ENCODE measurements at regions of chr7 and their contacts with region 1.

Region 1: DNA sequence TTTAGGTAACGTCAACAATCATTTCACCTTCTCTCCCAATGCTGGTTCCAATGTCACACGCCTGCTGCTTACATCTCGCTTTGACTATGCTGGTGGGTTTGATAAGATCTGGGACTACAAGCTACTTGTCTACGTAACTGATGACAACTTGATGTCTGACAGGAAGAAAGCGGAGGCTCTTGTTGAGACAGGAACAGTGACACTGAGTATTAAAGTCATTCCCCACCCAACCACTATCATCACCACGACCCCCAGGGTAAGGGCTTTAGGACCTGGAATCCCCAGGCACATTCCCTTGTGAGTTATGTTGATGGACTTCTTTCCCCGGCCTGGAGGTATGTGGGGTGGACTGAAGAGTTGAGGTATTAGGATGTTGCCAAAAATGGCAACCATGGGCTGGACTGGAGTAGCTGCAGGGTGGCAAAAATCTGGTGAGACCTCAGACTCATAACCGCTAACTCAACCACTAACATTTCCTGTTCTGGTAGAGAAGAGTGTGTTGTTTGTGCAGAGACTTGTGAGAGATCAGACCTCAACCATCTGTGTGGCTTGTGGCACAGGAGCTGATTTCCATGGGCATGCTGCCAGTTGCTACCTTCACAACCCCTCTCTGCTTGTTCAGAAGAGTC is 59.2 kb downstream of the CDHR3 start:
- DNase-seq: peak; percentile 82
- ATAC-seq: peak; percentile 87
- H3K4me3 Mint-ChIP-seq: peak overlapping the region; percentile 19
- H3K27ac Mint-ChIP-seq: peak overlapping the region; percentile 84
- H3K4me1 Mint-ChIP-seq: peaks cover 57% of the 10 kb centered on the region
- H3K27me3 Mint-ChIP-seq: no peaks in the 10 kb centered on the region

Region 2: GRCh38 chr7:105678811-105679495 is 343.4 kb before region 1 on chr7:
- CTCF ChIA-PET with region 1: interaction called, 6 read pairs
- POLR2A ChIA-PET with region 1: no interaction called
- intact Hi-C with region 1: loop called (anchors 5 kb)
- DNase-seq: peak; percentile 62
- ATAC-seq: peak; percentile 21
- H3K4me3 Mint-ChIP-seq: peak overlapping the region; percentile 83
- H3K27ac Mint-ChIP-seq: peak overlapping the region; percentile 93
- H3K4me1 Mint-ChIP-seq: peaks cover 63% of the 10 kb centered on the region
- H3K27me3 Mint-ChIP-seq: no peaks in the 10 kb centered on the region

Region 3: GRCh38 chr7:105691733-105692564 is 330.4 kb before region 1 on chr7:
- CTCF ChIA-PET with region 1: interaction called, 3 read pairs
- POLR2A ChIA-PET with region 1: no interaction called
- intact Hi-C with region 1: loop called in 1 of 2 experiments (anchors 5 kb)
- DNase-seq: peak; percentile 71
- ATAC-seq: peak; percentile 53
- H3K4me3 Mint-ChIP-seq: peak overlapping the region; percentile 76
- H3K27ac Mint-ChIP-seq: peak overlapping the region; percentile 93
- H3K4me1 Mint-ChIP-seq: peaks cover 43% of the 10 kb centered on the region
- H3K27me3 Mint-ChIP-seq: no peaks in the 10 kb centered on the region

Region 4: DNA sequence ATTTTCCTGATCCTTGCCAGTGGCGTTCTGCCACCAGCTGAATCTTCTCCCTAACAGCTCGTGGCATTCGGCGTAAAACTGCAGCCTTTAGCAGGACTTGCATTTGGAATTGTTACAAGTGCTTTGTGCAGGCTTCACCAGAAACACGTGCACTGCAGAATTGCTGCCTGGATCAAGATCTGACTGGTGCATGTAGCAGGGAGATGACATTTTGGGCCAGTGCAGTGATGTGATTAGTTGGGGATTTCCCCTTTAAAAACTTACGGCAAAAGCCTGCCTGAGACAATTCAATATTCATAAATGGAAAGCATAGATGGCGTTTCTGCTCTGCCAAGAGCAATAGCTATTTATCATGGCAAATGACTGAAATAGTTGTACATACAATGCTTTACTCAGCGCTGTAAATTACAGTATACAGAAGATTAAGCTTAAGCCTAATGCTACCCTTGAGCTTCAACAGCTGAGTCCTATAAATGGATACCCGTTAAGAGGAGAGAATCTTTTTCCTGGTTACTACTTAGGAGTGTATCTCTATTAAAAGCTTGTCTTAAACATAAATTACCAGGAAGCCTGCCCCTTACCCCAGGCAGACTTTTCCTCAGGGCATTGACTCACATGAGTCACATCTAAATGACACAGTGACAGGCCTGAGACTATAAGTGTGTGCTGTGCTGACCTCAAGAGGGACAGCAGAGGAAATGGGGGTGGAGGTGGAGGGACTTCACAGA is 252.2 kb before region 1 on chr7:
- CTCF ChIA-PET with region 1: no interaction called
- POLR2A ChIA-PET with region 1: interaction called, 5 read pairs
- intact Hi-C with region 1: loop called (anchors 5 kb)
- DNase-seq: peak; percentile 53
- ATAC-seq: peak; percentile 70
- H3K4me3 Mint-ChIP-seq: no peak overlapping the region
- H3K27ac Mint-ChIP-seq: no peak overlapping the region
- H3K4me1 Mint-ChIP-seq: peaks cover 40% of the 10 kb centered on the region
- H3K27me3 Mint-ChIP-seq: no peaks in the 10 kb centered on the region

Region 5: DNA sequence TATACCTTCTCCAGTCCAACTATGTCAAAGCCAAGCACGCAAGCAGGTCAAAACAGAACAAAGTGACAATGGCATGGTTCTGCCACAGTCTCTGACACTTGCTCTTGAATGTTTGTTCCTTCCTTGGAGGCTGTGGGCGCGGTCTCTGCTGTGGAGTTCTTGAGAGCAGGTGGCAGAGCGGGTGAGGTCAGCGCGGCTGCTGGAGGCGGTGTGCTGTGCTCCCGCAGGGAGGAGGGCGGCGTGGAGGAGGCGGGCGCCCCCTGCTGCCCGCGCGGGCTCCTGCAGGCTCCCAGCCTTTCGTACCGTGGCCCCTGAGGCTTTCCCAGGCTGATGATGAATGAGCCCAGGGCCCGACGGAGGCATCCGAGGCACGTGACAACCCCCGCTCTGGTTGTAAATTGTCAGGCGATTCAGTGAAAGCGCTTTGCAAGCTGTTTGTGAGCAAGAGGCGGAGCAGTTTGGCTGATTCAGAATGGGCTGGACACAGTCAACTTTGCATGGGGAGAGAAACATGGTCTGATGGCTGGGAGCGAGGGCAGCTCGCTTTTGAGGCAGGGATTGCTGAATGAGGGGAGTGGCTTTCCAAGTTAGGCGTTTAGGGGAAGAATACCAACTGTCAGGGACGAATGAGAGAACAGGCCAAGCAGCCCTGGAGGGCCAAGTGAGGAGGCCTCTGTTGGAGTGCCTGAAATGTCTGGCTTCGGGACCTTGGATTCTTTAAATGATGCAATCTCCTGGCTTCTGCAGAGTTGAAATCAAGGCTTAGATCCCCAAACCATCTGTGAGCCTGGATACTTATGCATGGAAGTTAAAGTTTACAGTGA is 12.7 kb before region 1 on chr7:
- CTCF ChIA-PET with region 1: interaction called, 9 read pairs
- POLR2A ChIA-PET with region 1: no interaction called
- intact Hi-C with region 1: loop called in 1 of 2 experiments (anchors 2 kb)
- DNase-seq: peak; percentile 92
- ATAC-seq: peak; percentile 99
- H3K4me3 Mint-ChIP-seq: no peak overlapping the region
- H3K27ac Mint-ChIP-seq: peak overlapping the region; percentile 4
- H3K4me1 Mint-ChIP-seq: peaks cover 21% of the 10 kb centered on the region
- H3K27me3 Mint-ChIP-seq: peaks cover 2% of the 10 kb centered on the region

Region 6: DNA sequence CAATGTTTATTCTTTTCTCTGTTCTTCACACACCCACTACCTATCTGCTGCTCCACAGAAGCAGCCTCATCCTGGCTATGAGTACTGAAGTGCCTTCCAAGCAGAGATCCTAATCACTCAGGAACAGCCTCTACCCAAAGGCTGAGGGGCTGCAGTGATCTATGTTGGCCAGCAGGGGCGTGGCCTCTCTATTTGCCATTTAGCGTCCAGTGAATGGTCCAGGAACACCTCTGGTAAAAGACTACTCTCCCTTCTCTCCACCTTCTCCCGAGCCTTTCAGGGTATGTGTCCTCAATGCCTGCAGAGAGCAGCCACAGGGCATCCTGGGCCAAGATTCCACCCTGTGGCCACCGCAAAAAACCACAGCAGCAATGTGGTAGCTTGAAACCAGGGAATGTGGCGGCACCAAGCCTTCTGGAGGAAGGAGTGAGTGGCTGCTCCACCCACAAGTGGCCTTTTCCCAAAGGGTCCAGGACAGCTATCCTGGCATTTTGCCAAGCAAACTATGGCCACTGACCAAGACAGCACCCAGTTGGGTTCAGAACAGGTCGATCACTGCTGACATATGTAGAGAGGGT is 18.9 kb after region 1 on chr7:
- CTCF ChIA-PET with region 1: interaction called, 26 read pairs
- POLR2A ChIA-PET with region 1: interaction called, 3 read pairs
- intact Hi-C with region 1: loop called in 1 of 2 experiments (anchors 2 kb)
- DNase-seq: peak; percentile 59
- ATAC-seq: peak; percentile 42
- H3K4me3 Mint-ChIP-seq: no peak overlapping the region
- H3K27ac Mint-ChIP-seq: no peak overlapping the region
- H3K4me1 Mint-ChIP-seq: peaks cover 31% of the 10 kb centered on the region
- H3K27me3 Mint-ChIP-seq: no peaks in the 10 kb centered on the region